Dorsolateral prefrontal cortex (tissue), 120 donors: ENCODE measurements at regions of chr5 and their contacts with region 1.

Region 1: GRCh38 chr5:66223636-66224035 is 79.5 kb downstream of the SREK1 start:
- DNase-seq: peak in 6 of 10 donors; percentile 27 to 57 (median 49)
- H3K4me3 ChIP-seq: no peak overlapping the region
- H3K27ac ChIP-seq: no peak overlapping the region
- H3K27me3 ChIP-seq: no peaks in the 10 kb centered on the region
- CTCF ChIP-seq: peak in 52 of 56 donors; percentile 13 to 71 (median 46)

Region 2: GRCh38 chr5:66171349-66172344 is 52.0 kb before region 1 on chr5:
- intact Hi-C with region 1: loop called in 1 of 2 experiments (anchors 5 kb)
- DNase-seq: peak in 2 of 10 donors; percentile 11 to 18
- H3K4me3 ChIP-seq: peak overlapping the region in 1 of 59 donors; percentile 22
- H3K27ac ChIP-seq: peak overlapping the region in 7 of 59 donors; percentile 3 to 36 (median 21)
- H3K27me3 ChIP-seq: no peaks in the 10 kb centered on the region
- CTCF ChIP-seq: peak; percentile 45 to 83 (median 70)